ENCODE measurements at regions of chr5 and their contacts with region 1.

Region 1: GRCh38 chr5:149367249-149367971 is 9.6 kb downstream of the PCYOX1L start:
- DNase-seq: peak; percentile 74
- H3K4me3 ChIP-seq: no peak overlapping the region
- H3K27ac ChIP-seq: no peak overlapping the region
- H3K4me1 ChIP-seq: no peaks in the 10 kb centered on the region
- H3K27me3 ChIP-seq: no peaks in the 10 kb centered on the region
- CTCF ChIP-seq: peak; percentile 82

Region 2: DNA sequence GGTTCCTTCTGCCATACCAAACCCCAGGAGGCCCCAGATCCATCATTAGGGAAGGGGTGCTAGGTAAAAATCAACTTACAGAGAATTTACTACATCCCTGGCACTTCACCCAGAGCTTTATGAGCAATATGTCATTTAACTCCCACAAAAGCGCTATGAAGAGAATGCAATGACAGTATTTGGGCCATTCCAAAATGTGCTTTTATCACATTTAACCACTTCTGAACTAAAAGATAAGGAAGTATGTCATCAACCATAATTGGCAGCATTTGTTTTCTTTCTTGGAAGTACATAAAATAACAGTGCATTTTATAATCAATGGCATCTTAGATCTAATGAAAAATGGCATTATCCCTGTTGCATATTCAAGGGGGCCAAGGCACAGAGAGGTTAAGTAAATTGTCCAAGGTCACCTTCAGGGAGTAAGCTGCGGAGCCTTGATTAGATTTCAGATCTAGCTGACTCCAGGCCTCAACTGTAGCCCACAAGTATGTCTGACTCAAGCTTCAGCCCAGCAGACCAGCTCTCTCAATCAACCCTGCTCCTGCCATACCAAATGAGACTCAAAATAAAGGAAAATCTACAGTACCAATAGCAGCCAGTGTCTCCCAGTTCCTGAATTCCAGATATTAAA is 321.1 kb before region 1 on chr5:
- intact Hi-C with region 1: no loop called
- DNase-seq: no peak
- H3K4me3 ChIP-seq: no peak overlapping the region
- H3K27ac ChIP-seq: no peak overlapping the region
- H3K4me1 ChIP-seq: no peaks in the 10 kb centered on the region
- H3K27me3 ChIP-seq: no peaks in the 10 kb centered on the region
- CTCF ChIP-seq: no peak

Region 3: DNA sequence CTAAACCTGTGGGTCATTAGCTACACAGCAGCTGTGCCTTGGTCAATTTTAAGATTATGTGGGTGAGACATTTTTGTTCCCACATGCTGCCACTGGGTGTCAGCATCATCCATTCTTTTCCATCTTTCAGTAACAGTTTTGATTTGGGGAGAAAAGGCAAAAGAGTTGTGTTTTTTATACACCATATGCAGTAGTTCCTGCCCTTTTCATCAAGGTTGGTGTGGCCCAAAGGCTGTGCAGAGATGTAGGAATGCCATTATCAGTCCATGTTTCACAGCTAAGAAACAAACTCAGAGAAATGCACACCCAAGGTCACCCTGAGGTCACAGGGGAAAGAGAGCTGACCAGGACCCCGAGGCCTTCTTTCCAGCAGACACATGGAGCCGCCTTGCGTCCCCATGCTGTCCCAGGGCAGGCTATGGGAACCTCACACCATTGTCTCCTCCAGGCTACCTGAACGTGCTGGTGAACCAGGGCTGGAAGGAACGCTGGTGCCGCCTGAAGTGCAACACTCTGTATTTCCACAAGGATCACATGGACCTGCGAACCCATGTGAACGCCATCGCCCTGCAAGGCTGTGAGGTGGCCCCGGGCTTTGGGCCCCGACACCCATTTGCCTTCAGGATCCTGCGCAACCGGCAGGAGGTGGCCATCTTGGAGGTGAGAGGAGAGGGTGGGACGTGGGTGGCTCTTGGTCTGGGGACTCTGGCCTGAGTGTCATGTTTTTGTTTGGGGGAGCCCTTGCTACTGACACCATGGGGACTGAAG is 49.9 kb before region 1 on chr5:
- intact Hi-C with region 1: loop called (anchors 5 kb)
- DNase-seq: peak; percentile 41
- H3K4me3 ChIP-seq: no peak overlapping the region
- H3K27ac ChIP-seq: no peak overlapping the region
- H3K4me1 ChIP-seq: peaks cover 10% of the 10 kb centered on the region
- H3K27me3 ChIP-seq: no peaks in the 10 kb centered on the region
- CTCF ChIP-seq: peak; percentile 75